HCT116 (cell line): ENCODE measurements at regions of chr11 and their contacts with region 1.

Region 1: DNA sequence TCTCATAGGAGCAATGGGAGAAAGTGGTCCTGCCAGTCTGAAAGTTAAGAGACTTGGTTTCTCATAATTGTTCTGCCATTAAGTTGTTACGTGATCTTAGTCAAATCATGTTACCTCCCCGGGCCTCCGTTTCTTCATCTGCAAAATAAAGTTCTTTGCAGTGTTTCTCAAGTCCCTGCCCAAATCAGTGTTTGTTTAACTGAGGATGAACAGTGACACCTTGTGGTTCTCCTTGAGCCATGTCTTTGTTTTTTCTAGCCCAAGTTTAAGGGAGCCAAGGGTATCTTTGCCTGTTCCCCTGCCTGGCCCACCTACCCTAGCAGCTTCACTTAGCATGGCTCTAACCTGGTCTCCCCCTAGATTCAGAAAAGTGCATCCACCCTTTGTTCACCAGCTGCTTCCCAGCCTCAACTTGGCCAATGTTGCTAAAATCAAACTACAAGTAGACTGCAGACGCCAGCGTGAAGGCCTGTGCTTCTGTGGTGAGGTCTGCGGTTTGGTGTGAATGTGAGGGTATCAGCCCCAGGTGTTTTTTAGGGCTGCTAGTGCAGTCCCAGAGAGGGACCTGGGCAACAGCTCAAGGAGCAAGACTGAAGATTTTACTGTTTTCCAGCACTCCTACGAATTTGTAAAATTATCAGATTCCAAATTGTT is 35.5 kb downstream of the FZD4 start:
- DNase-seq: peak; percentile 54
- ATAC-seq: peak; percentile 84
- H3K4me3 ChIP-seq: no peak overlapping the region
- H3K27ac ChIP-seq: no peak overlapping the region
- H3K4me1 ChIP-seq: peaks cover 12 to 20% of the 10 kb centered on the region in 2 experiments
- H3K27me3 ChIP-seq: no peaks in the 10 kb centered on the region
- CTCF ChIP-seq: peak; percentile 67 to 77 (median 71)
- POLR2A ChIP-seq: no peak
- RAD21 ChIP-seq: peak; percentile 89

Region 2: DNA sequence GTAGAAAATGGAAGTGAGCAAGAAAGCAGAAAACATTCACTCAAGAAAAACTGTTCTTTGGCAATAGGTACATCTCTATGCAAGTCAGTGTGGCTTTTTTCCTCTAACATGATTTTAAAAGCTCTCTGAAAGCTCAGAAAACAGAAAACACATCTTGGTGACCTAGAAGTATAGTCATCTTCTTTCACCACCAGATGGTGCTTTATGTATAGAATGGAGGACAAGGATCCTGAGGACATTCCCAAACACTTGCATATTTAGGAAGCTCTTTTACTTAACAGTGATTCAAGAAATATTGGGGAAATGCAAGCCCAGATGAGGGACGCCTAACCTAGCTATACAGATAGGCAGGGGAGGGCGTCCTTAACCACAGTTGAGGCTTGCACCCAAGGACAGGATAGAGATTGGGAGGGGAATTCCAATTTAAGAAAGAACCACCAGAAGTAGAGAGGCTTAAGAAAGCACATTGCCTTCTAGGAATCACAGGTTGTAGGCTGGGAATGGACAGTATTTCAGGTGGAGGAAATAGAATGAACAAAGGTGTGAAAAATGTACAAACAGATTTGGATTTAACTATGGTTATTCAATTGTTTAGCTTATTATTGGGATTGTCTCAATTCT is 558.8 kb before region 1 on chr11:
- CTCF ChIA-PET with region 1: no interaction called
- POLR2A ChIA-PET with region 1: no interaction called
- RAD21 ChIA-PET with region 1: no interaction called
- intact Hi-C with region 1: loop called (anchors 5 kb)
- DNase-seq: peak; percentile 23
- ATAC-seq: peak; percentile 71
- H3K4me3 ChIP-seq: no peak overlapping the region
- H3K27ac ChIP-seq: no peak overlapping the region
- H3K4me1 ChIP-seq: no peaks in the 10 kb centered on the region
- H3K27me3 ChIP-seq: no peaks in the 10 kb centered on the region
- CTCF ChIP-seq: peak; percentile 8 to 57 (median 50); a peak in 4 of 6 replicates
- POLR2A ChIP-seq: no peak
- RAD21 ChIP-seq: peak; percentile 71

Region 3: DNA sequence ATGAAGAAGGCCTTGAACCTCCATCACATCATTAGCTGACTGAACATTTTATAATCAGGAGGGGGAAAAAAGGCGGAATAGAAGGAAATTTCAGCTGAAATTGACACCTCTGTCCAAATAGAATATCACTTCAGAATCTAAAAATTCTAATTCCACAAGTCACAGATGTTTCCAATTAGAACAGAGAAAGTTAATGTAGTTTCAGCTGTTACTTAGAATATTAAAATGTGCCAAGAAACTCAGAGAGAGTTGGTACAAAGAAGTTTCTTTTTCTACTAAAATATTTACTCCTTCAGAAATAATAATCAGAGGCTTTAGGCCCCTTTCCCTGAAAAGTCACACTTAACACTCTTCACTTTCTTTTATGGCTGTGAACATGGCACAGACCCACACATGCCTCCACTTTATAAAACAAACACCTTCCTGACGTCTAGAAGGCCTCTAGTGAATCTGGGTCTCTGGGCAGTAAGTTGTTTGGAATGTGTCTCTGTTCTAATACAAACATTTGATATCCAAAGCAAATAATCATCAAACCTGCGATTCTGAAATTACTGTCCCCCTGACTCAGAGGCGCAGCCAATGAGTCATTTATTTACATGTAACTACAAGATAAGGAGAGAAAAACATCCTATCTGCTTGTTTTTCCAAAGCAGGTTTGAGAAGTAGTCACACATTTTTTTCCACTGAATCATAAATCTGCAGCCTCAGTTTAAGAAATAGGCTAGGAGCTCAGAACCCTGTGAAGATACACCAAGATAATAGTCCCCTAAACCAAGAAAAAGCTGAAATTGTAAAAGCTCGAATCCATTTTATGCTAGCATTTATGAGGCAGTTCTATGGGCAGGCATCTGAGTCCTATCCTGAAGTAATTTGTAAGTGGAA is 395.7 kb before region 1 on chr11:
- CTCF ChIA-PET with region 1: no interaction called
- POLR2A ChIA-PET with region 1: no interaction called
- RAD21 ChIA-PET with region 1: no interaction called
- intact Hi-C with region 1: loop called (anchors 5 kb)
- DNase-seq: peak; percentile 91
- ATAC-seq: peak; percentile 87
- H3K4me3 ChIP-seq: peak overlapping the region; percentile 5 to 36; a peak in 3 of 4 replicates
- H3K27ac ChIP-seq: peak overlapping the region; percentile 80
- H3K4me1 ChIP-seq: peaks cover 36 to 42% of the 10 kb centered on the region in 2 experiments
- H3K27me3 ChIP-seq: no peaks in the 10 kb centered on the region
- CTCF ChIP-seq: 0 out of 6 replicates have a peak, but pooled peaks of 1 of the 3 experiments have one; percentile 4
- POLR2A ChIP-seq: no peak
- RAD21 ChIP-seq: 0 out of 2 replicates have a peak, but pooled peaks have one; percentile 22

Region 4: GRCh38 chr11:86869966-86870570 is 49.6 kb before region 1 on chr11:
- CTCF ChIA-PET with region 1: interaction called, 34 read pairs
- POLR2A ChIA-PET with region 1: no interaction called
- RAD21 ChIA-PET with region 1: interaction called in 1 of 2 experiments, 4 read pairs
- intact Hi-C with region 1: loop called (anchors 1 kb)
- DNase-seq: peak; percentile 41
- ATAC-seq: peak; percentile 97
- H3K4me3 ChIP-seq: no peak overlapping the region
- H3K27ac ChIP-seq: no peak overlapping the region
- H3K4me1 ChIP-seq: no peaks in the 10 kb centered on the region
- H3K27me3 ChIP-seq: no peaks in the 10 kb centered on the region
- CTCF ChIP-seq: peak; percentile 74 to 89 (median 81)
- POLR2A ChIP-seq: no peak
- RAD21 ChIP-seq: peak; percentile 94